ENCODE measurements at regions of chr15 and their contacts with region 1.

Region 1: DNA sequence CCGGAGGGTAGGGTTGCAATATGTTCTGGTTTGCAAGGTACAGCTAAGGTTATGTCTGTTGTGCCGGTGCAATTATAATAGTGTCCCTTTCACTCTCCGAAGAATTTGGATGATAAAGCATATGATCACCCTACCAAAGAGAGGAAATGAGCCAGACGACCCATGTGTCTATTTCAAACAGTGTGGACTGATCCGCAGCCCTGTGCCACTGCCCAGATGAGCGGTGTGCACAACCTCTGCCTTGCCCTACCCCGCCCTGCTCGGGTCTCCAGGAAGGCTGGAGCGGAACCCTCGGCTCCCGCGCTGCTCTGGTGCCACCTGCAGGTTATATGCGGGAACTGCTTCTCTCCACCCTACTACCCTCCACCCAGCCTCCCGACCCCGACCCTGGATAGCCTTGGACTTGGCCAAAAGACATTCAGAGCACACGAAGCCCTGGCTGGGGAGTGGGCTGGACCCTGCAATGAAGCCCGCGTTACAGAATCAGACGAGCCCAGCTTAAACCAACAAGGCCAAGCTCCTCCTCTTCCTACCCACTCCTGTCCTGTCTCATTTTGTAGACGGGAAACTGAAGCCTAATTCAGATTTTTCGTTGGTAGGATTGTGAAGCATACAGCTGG is 68.4 kb upstream of the CHRNB4 start:
- DNase-seq: peak; percentile 76
- H3K4me3 Mint-ChIP-seq: no peak overlapping the region
- H3K27ac Mint-ChIP-seq: no peak overlapping the region
- H3K4me1 Mint-ChIP-seq: peaks cover 9% of the 10 kb centered on the region
- H3K27me3 Mint-ChIP-seq: peaks cover 24% of the 10 kb centered on the region

Region 2: GRCh38 chr15:78308422-78309032 is 400.8 kb before region 1 on chr15:
- CTCF ChIA-PET with region 1: interaction called, 13 read pairs
- DNase-seq: peak; percentile 71
- H3K4me3 Mint-ChIP-seq: no peak overlapping the region
- H3K27ac Mint-ChIP-seq: no peak overlapping the region
- H3K4me1 Mint-ChIP-seq: no peaks in the 10 kb centered on the region
- H3K27me3 Mint-ChIP-seq: peaks cover 51% of the 10 kb centered on the region

Region 3: GRCh38 chr15:78618490-78618934 is 90.9 kb before region 1 on chr15:
- CTCF ChIA-PET with region 1: interaction called, 29 read pairs
- DNase-seq: peak; percentile 87
- H3K4me3 Mint-ChIP-seq: no peak overlapping the region
- H3K27ac Mint-ChIP-seq: no peak overlapping the region
- H3K4me1 Mint-ChIP-seq: peaks cover 20% of the 10 kb centered on the region
- H3K27me3 Mint-ChIP-seq: peaks cover 76% of the 10 kb centered on the region

Region 4: GRCh38 chr15:78638658-78639314 is 70.6 kb before region 1 on chr15:
- CTCF ChIA-PET with region 1: interaction called, 24 read pairs
- DNase-seq: peak; percentile 68
- H3K4me3 Mint-ChIP-seq: no peak overlapping the region
- H3K27ac Mint-ChIP-seq: no peak overlapping the region
- H3K4me1 Mint-ChIP-seq: peaks cover 15% of the 10 kb centered on the region
- H3K27me3 Mint-ChIP-seq: peaks cover 59% of the 10 kb centered on the region

Region 5: GRCh38 chr15:78691167-78691872 is 18.1 kb before region 1 on chr15:
- CTCF ChIA-PET with region 1: interaction called, 10 read pairs
- DNase-seq: no peak
- H3K4me3 Mint-ChIP-seq: no peak overlapping the region
- H3K27ac Mint-ChIP-seq: no peak overlapping the region
- H3K4me1 Mint-ChIP-seq: no peaks in the 10 kb centered on the region
- H3K27me3 Mint-ChIP-seq: peaks cover 12% of the 10 kb centered on the region